Activated CD8-positive, alpha-beta T cell treated with anti-CD3 and anti-CD28 coated beads for 36 hours (primary cell): ENCODE measurements at regions of chr5 and their contacts with region 1.

Region 1: GRCh38 chr5:40736103-40736875 is 19.5 kb downstream of the TTC33 start:
- DNase-seq: no peak
- ATAC-seq: peak; percentile 77
- H3K4me3 Mint-ChIP-seq: no peak overlapping the region
- H3K27ac Mint-ChIP-seq: no peak overlapping the region
- H3K4me1 Mint-ChIP-seq: peaks cover 27% of the 10 kb centered on the region
- H3K27me3 Mint-ChIP-seq: no peaks in the 10 kb centered on the region
- CTCF ChIP-seq: peak; percentile 80

Region 2: DNA sequence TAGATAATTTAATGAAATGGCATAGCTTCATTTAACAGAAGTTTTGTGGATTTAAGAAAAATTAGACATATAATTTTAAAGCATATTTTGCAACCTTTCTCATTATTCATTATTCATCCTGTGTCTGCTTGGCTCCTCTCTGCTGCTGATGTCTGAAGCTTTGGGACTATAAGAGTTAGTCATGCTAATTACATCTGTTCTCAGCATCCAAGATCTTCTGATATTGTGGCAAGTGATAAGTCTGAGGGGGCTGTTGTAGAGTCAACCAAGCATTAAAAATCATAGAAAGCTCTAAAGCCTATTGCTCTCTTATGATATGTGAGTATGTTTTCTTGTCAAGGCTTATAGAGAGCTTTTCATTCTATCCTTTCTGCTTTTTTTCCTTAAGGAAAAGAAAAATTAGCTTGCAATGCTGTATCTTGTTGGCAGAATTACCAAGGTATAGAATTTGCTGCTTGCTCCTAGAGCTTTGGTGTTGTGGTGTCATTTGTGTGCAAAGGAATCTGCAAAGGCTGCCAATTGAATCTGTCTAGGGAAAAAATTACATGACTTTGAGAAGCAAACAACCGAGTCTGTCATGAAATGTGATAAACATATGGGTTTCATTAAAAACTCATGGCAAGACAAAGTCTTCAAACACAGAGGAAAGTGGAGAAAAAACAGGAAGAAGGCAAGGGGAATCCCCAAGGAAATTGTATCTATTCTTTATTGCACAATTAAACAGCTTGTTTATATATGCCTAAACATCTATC is 1155.4 kb before region 1 on chr5:
- CTCF ChIA-PET with region 1: no interaction called
- POLR2A ChIA-PET with region 1: no interaction called
- intact Hi-C with region 1: loop called (anchors 10 kb)
- DNase-seq: no peak
- ATAC-seq: no peak
- H3K4me3 Mint-ChIP-seq: no peak overlapping the region
- H3K27ac Mint-ChIP-seq: no peak overlapping the region
- H3K4me1 Mint-ChIP-seq: peaks cover 5% of the 10 kb centered on the region
- H3K27me3 Mint-ChIP-seq: no peaks in the 10 kb centered on the region
- CTCF ChIP-seq: no peak

Region 3: DNA sequence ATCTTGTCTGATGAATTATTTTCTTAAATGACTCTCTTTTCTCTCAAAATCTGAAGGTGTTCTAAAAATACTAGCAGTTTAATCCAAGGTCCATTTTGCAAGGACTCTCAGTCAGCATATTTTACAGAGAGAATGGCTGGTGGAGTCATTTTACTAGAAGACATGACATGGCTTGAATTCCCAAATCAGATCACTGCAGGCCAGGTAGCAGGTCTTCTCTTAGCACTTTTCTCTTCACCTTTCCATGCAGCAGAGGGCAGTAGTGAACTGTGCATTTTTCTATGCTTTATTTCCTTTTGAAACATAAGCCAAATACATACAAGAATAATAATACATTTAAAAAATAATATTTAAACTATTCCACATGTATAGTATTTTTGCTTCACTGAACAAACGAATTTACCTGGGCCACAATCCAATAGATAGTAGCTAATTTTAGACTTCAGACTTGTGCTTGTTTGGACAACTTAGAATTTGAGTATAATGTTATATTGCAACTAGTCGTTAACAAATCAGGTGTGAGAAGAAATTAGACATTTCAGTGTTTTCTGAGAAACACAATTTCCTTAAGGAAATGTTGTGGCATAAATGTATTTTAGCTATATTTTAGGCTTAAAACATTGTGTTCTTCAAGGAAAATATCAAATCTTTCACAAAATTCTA is 1022.1 kb before region 1 on chr5:
- CTCF ChIA-PET with region 1: interaction called, 6 read pairs
- POLR2A ChIA-PET with region 1: no interaction called
- intact Hi-C with region 1: loop called (anchors 10 kb)
- DNase-seq: peak; percentile 53
- ATAC-seq: no peak
- H3K4me3 Mint-ChIP-seq: no peak overlapping the region
- H3K27ac Mint-ChIP-seq: no peak overlapping the region
- H3K4me1 Mint-ChIP-seq: no peaks in the 10 kb centered on the region
- H3K27me3 Mint-ChIP-seq: peaks cover 7% of the 10 kb centered on the region
- CTCF ChIP-seq: peak; percentile 68

Region 4: GRCh38 chr5:39948867-39949468 is 787.3 kb before region 1 on chr5:
- CTCF ChIA-PET with region 1: interaction called, 14 read pairs
- POLR2A ChIA-PET with region 1: no interaction called
- intact Hi-C with region 1: loop called (anchors 2 kb)
- DNase-seq: peak; percentile 74
- ATAC-seq: peak; percentile 83
- H3K4me3 Mint-ChIP-seq: no peak overlapping the region
- H3K27ac Mint-ChIP-seq: no peak overlapping the region
- H3K4me1 Mint-ChIP-seq: peaks cover 3% of the 10 kb centered on the region
- H3K27me3 Mint-ChIP-seq: no peaks in the 10 kb centered on the region
- CTCF ChIP-seq: peak; percentile 62

Region 5: GRCh38 chr5:40714001-40714400 is 22.3 kb before region 1 on chr5:
- CTCF ChIA-PET with region 1: interaction called, 17 read pairs
- POLR2A ChIA-PET with region 1: no interaction called
- intact Hi-C with region 1: no loop called
- DNase-seq: no peak
- ATAC-seq: no peak
- H3K4me3 Mint-ChIP-seq: no peak overlapping the region
- H3K27ac Mint-ChIP-seq: no peak overlapping the region
- H3K4me1 Mint-ChIP-seq: peaks cover 14% of the 10 kb centered on the region
- H3K27me3 Mint-ChIP-seq: no peaks in the 10 kb centered on the region
- CTCF ChIP-seq: no peak